PC-3 (cell line): ENCODE measurements at regions of chr20 and their contacts with region 1.

Region 1: GRCh38 chr20:32743237-32744112 is at the start of gene COMMD7:
- DNase-seq: peak; percentile 59
- ATAC-seq: peak; percentile 53
- H3K4me3 ChIP-seq: peak within 1 kb of the TSS; percentile 79
- H3K27ac ChIP-seq: no peak within 1 kb of the TSS
- H3K4me1 ChIP-seq: peaks cover 28% of the 10 kb centered on the region
- H3K27me3 ChIP-seq: no peaks in the 10 kb centered on the region
- CTCF ChIP-seq: no peak
- total RNA-seq, gene COMMD7: 32.5 and 33.5 TPM in 2 replicates

Region 2: GRCh38 chr20:32062776-32063170 is 680.7 kb before region 1 on chr20:
- CTCF ChIA-PET with region 1: no interaction called
- POLR2A ChIA-PET with region 1: no interaction called
- intact Hi-C with region 1: no loop called
- DNase-seq: no peak
- ATAC-seq: no peak
- H3K4me3 ChIP-seq: no peak overlapping the region
- H3K27ac ChIP-seq: no peak overlapping the region
- H3K4me1 ChIP-seq: no peaks in the 10 kb centered on the region
- H3K27me3 ChIP-seq: peaks cover 66% of the 10 kb centered on the region
- CTCF ChIP-seq: no peak

Region 3: GRCh38 chr20:32674362-32674789 is 69.1 kb before region 1 on chr20:
- CTCF ChIA-PET with region 1: no interaction called
- POLR2A ChIA-PET with region 1: no interaction called
- intact Hi-C with region 1: loop called (anchors 1 kb)
- DNase-seq: peak; percentile 82
- ATAC-seq: peak; percentile 74
- H3K4me3 ChIP-seq: no peak overlapping the region
- H3K27ac ChIP-seq: no peak overlapping the region
- H3K4me1 ChIP-seq: peaks cover 10% of the 10 kb centered on the region
- H3K27me3 ChIP-seq: no peaks in the 10 kb centered on the region
- CTCF ChIP-seq: peak; percentile 91

Region 4: DNA sequence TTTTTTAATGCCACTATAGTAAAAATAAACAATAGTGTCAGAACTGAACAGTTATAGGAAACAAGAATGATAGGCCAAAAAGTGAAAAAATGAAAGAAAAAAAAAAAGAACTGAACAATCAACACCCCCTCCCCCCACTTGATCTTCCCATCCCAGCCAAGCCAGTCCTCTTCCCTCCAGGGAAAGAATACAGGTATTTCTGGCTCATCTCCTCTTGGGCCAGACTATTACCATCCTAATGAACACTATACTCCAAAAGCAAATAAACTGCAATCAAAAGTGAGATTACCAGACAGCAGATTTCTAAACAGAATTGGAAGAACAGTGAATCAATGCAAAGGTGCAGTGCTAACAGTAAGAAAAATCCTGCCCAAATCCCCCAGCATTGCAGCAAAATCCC is 48.4 kb before region 1 on chr20:
- CTCF ChIA-PET with region 1: no interaction called
- POLR2A ChIA-PET with region 1: no interaction called
- intact Hi-C with region 1: no loop called
- DNase-seq: no peak
- ATAC-seq: no peak
- H3K4me3 ChIP-seq: no peak overlapping the region
- H3K27ac ChIP-seq: no peak overlapping the region
- H3K4me1 ChIP-seq: no peaks in the 10 kb centered on the region
- H3K27me3 ChIP-seq: no peaks in the 10 kb centered on the region
- CTCF ChIP-seq: no peak

Region 5: GRCh38 chr20:32819992-32820710 is 76.7 kb after region 1 on chr20:
- CTCF ChIA-PET with region 1: no interaction called
- POLR2A ChIA-PET with region 1: no interaction called
- intact Hi-C with region 1: no loop called
- DNase-seq: peak; percentile 71
- ATAC-seq: peak; percentile 81
- H3K4me3 ChIP-seq: peak overlapping the region; percentile 99
- H3K27ac ChIP-seq: peak overlapping the region; percentile 49
- H3K4me1 ChIP-seq: peaks cover 30% of the 10 kb centered on the region
- H3K27me3 ChIP-seq: no peaks in the 10 kb centered on the region
- CTCF ChIP-seq: no peak